Common myeloid progenitor, CD34-positive (primary cell): ENCODE measurements at regions of chr11 and their contacts with region 1.

Region 1: GRCh38 chr11:128848815-128849455 is 18.2 kb downstream of the KCNJ1 start:
- DNase-seq: peak; percentile 52 to 71 (median 70)
- H3K4me3 ChIP-seq: no peak overlapping the region
- H3K27ac ChIP-seq: no peak overlapping the region
- H3K4me1 ChIP-seq: peaks cover 0 to 10% (median 4%) of the 10 kb centered on the region in 4 experiments
- H3K27me3 ChIP-seq: no peaks in the 10 kb centered on the region

Region 2: DNA sequence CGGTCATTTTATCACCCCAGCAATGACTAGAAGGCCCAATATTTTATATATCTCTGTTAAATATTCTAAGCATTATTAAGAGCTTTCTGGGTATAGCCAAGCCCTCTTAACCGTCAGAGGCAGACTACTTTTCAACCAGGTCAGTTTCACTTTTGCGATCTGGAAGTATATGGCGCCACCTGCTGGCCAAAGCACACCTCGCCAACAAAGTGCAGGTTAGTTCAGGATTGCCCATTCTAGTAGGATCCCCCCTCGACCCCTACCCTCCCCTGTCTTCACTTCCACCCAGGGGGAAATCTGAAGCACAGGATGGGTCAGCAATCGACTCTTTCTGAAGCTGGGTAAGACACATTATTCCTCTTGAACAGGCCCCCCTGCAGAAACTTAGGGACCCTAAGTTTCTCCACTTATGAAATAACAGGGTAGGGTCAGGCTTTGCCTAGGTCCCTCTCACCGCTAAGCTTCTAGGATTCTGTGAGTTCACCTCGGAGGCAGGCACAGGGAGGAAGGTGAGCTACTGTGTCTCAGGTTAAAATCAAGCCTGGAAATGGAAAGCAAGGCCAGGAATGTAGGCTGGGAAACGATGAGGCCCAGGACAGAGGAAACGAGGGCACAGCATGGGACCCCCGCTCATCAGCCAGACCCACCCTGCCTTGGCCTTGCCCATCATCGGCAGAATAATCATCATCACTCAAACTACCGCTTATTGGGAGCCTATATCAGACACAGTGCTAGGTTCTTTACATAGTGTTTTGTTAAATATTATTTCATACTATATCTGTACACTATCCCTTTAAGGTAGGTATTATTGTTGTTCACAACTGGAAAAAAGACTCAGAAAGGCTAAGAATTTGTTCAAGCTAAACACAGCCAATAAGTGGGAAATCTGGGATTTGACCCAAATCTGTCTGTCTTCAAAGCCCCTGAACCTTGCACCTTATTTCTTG is 17.5 kb before region 1 on chr11:
- CTCF ChIA-PET with region 1: interaction called, 28 read pairs
- POLR2A ChIA-PET with region 1: no interaction called
- DNase-seq: peak; percentile 82 to 92 (median 90)
- H3K4me3 ChIP-seq: peak overlapping the region in 5 of 7 experiments; percentile 4 to 68 (median 33)
- H3K27ac ChIP-seq: peak overlapping the region in 1 of 2 experiments; percentile 14
- H3K4me1 ChIP-seq: peaks cover 11 to 33% (median 12%) of the 10 kb centered on the region in 4 experiments
- H3K27me3 ChIP-seq: no peaks in the 10 kb centered on the region

Region 3: DNA sequence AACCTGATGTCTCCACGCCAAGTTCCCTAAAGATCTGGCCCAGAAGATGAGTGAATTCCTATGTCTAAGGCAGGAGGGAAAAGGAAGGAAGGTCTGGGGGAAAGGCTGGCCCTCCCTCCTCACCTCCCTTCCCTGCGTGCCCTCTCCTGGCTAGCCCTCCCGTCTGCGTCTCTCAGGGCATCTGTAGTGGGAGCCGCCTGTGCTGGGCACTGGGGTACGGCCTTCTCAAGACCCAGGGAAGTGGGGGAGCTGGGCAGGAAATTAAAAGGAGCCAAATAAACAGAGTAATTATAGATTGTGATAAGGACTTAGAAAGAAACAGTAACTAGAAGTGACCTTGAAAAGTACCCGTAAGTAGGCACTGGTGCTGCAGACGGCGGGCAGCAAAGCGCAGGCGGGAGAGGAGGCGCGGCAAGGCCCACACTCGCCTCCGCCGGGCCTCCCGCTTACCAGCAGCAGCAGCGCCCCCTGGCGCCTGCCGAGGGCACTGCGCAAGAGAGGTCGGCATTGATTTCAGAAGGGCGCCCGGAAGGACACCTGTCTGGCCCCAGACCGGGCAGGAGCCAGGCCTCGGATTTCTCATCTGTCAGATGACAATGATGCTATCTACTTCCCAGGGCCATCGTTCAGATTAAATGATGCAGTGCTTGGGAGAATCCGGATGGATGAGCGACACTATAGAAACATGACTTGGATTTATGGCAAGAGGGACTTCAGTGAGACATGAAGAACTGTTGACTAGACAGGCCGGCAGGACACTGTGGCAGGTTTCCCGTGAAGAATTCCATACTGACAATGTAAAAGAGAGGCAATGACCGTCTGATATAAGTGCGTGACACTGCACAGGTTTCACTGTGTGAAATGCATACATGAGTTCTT is 10.9 kb after region 1 on chr11:
- CTCF ChIA-PET with region 1: interaction called, 53 read pairs
- POLR2A ChIA-PET with region 1: no interaction called
- DNase-seq: peak; percentile 67 to 81 (median 81)
- H3K4me3 ChIP-seq: no peak overlapping the region
- H3K27ac ChIP-seq: no peak overlapping the region
- H3K4me1 ChIP-seq: peaks cover 0 to 4% (median 1%) of the 10 kb centered on the region in 4 experiments
- H3K27me3 ChIP-seq: peaks cover 0 to 1% (median 0%) of the 10 kb centered on the region in 5 experiments

Region 4: DNA sequence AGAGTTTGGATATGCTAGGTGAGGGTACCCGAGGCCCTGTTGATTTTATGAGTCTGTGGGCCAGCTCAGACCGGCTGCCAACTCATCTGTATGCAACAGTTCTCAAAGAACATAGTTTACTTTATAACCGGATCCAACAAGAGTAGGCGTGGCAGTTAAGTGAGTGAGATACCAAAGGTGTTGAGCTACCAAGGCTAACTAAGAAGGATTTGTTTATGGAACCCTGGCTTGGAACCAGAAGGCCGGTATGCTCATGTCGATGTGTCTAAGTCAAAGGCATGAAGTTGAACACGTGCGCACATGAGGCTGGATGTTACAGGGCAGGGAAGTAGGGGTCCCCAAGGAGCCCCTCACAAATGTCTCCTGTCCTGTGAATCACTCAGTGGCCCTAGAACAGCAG is 18.3 kb after region 1 on chr11 and contains the start of gene KCNJ1:
- CTCF ChIA-PET with region 1: interaction called, 19 read pairs
- POLR2A ChIA-PET with region 1: no interaction called
- DNase-seq: peak in 2 of 3 donors; percentile 71 to 82
- H3K4me3 ChIP-seq: no peak within 1 kb of the TSS
- H3K27ac ChIP-seq: no peak within 1 kb of the TSS
- H3K4me1 ChIP-seq: no peaks in the 10 kb centered on the region
- H3K27me3 ChIP-seq: peaks cover 0 to 9% (median 0%) of the 10 kb centered on the region in 5 experiments